AG04449 (cell line): ENCODE measurements at regions of chr19 and their contacts with region 1.

Region 1: DNA sequence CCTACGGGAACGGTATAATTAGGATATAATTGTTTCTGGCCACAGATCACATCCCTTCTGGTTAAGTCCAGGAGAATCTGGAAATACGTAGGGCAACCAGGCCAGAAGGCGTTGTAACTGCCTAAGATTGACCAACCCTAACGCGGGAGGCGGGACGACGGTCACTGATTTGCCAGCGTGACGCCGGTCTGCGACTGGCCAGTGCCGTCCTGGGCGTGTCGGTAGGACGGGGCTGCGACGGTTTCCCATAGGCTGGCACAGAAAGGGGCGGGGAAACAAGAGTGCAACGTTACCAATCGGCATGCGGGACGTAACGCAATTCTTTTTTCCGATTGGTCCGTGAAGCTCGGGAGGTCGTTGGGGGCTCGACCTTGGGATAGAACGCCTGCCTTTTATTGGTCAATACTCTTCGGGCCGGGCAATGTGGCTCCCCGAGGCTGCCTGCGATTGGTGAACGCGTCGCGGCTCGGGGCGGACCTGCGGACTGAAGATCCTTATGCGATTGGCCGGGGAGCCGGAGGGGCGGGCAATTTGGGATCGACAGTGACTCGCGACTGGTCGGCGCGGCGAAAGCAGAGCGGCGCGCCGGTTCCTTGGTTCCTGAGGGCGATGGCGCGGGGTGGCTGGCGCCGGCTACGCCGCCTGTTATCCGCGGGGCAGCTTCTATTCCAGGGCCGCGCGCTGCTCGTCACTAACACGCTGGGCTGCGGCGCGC is at the start of gene MPV17L2:
- DNase-seq: peak; percentile 100
- H3K4me3 ChIP-seq: peak within 1 kb of the TSS; percentile 77
- CTCF ChIP-seq: no peak

Region 2: DNA sequence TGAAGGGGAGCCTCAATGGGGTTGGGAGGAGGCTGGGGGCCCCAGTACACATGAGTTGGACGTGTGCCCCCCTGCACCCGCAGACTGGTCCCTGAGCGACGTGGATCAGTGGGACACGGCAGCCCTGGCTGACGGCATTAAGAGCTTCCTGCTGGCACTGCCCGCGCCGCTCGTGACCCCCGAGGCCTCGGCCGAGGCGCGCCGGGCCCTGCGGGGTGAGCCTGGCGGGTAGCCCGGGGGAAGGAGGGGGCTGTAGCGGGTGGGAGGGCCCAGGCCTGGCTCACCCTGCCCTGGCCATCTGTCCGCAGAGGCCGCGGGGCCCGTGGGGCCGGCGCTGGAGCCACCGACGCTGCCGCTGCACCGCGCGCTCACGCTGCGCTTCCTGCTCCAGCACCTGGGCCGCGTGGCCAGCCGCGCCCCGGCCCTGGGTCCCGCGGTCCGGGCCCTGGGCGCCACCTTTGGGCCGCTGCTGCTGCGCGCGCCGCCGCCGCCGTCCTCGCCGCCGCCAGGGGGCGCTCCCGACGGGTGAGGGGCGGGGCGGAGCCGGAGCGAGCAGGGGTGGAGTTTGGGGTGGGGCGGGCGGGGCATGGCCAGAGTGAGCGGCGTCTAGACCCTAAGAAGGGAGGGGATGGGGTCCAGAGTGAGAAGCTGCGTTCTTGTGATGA is 31.7 kb before region 1 on chr19:
- CTCF ChIA-PET with region 1: interaction called, 18 read pairs
- POLR2A ChIA-PET with region 1: no interaction called
- DNase-seq: no peak
- H3K4me3 ChIP-seq: peak overlapping the region; percentile 27
- CTCF ChIP-seq: peak; percentile 55

Region 3: DNA sequence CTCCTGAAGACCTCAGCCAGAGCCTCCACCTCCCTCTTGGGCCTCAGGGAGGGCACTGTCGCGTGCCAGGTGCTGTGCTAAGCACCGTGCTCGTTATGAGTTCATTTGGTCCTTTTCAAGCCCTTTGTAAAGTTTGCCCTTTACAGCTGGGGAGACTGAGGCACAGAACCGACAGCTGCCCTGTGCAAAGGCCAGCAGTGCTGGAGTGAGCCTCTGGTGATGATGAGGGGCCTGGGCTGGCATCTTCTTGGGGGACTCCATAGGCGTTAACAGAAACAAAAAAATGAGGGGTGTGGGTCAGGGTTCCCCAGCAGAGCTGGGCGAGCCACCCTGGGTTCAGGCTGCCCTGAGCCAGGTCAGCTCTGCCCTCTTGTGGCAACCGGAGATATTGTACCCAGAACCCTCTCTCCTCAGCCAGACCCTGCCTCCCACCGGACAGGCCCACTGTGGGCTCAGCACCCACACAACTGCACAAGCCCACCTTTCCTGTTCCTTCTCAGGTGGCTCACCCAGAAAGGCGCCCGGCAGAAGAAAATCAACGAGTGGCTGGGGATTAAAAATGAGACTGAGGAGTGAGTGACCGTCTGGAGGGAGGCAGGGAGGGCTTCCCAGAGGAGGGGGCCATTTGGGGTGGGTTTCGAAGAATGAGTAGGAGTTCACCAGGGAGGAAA is 24.7 kb before region 1 on chr19:
- CTCF ChIA-PET with region 1: interaction called, 15 read pairs
- POLR2A ChIA-PET with region 1: no interaction called
- DNase-seq: no peak
- H3K4me3 ChIP-seq: no peak overlapping the region
- CTCF ChIP-seq: peak; percentile 72

Region 4: DNA sequence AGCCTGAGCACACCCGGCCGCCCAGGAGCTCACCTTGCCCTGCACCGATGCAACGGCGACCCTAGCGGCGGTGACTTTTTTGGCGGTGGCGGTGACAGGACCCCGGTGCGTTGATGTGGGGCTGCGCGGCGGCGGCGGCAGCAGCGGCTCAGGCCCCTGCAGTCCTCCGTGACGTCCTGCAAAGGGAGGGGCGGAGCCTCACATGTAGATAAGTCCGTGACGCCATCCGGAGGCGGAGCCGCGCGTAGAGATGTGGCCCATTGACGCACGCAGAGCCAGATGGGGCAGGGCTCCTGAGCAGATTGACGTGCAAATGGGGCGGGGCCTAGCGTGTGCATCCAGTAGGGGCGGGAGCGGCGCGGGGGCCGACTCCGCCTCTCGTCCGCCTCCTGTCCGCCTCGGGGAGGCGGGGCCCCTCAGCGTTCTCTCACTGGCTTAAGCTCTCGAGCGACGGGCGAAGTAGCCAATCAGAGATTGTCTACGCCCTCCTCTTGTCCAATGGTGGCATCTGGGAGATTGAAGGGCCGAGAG is 11.1 kb after region 1 on chr19 and contains the start of gene RAB3A:
- CTCF ChIA-PET with region 1: interaction called, 34 read pairs
- POLR2A ChIA-PET with region 1: no interaction called
- DNase-seq: peak; percentile 99
- H3K4me3 ChIP-seq: peak within 1 kb of the TSS; percentile 96
- CTCF ChIP-seq: no peak

Region 5: DNA sequence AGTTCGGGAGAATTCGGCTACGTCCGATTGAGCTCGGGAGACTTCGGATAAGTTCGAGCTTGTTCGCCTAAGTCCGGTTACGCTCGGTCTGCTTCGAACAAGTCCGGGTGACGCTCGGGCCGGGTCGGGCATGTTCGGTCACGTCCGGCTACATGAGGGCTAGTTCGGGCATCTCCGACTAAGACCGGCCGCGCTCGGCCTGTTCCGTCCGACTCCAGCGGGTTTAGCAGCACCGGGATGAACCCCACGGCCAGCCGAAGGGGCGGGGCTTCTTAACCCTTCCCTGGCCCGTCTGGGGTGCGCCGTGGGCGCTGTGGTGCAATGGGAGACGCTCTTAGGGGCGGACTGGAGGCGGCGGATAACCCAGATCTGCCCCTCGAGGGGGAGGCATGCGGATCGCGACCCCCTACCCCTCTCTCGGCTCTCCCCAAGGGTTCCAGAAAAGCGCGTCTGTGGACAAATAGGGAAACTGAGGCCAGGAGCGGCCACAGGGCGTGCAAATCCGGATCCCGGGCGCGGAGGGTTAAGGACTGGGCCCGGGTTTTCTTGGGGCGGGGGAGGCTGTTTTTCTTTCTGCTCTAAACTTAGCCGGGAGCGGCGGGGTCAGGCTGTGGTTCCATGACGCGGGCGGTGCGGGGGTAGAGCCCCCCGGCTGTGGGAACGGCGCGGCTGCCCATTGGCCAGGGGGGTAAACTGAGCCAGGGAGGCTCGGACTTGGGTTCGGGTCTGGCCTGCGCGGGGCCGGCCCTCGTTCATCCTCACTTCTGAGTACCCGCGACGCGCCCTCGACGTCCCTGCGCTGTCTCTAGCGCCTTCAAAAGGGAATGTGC is 31.9 kb after region 1 on chr19:
- CTCF ChIA-PET with region 1: interaction called, 10 read pairs
- POLR2A ChIA-PET with region 1: interaction called, 3 read pairs
- DNase-seq: peak; percentile 96
- H3K4me3 ChIP-seq: peak overlapping the region; percentile 62
- CTCF ChIP-seq: no peak

Region 6: GRCh38 chr19:18291590-18292461 is 99.0 kb after region 1 on chr19:
- CTCF ChIA-PET with region 1: no interaction called
- POLR2A ChIA-PET with region 1: no interaction called
- DNase-seq: no peak
- H3K4me3 ChIP-seq: peak overlapping the region; percentile 61
- CTCF ChIP-seq: no peak